ENCODE measurements at regions of chr18 and their contacts with region 1.

Region 1: DNA sequence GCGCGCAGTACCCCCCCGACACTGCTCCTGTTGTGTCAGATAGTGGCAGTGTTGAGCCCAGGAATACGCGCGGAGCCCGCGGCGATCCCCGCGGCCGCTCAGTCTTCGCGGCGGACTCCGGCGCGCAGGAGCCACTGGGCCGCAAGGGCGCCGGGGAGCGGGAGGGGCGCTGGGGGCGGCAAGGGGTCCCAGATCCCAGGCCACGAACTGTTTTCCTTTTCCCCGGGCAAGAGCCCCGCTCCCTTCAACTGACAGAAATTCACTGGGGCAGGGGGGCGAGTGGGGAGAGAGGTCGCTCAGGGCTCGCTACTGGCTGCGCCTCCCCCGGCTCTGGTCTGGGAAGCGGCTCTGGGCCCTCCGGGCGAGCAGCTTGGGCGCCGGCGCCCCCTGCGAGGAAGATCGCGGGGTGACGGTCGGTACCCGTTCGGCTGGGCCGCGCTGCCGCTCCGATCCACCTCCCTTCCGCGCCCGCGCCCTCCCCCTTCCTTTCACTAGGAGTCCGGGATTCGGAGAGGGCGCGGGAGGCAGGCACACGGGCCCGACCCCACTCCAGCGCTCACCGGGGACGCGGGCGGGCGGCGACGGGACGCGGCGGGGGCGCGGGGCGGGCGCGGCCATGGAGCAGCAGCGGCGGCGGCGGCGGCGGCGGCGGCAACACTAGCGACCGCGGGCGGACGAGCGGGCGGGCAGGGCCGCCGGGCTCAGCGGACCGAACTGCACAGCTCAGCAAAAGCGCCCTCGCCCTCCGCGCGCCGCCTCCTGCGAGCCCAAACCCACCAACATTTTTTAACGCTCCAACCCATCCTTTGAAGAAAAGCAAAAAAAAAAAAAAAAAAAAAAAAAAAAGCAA is 1.4 kb upstream of the SETBP1 start:
- DNase-seq: peak; percentile 83
- ATAC-seq: peak; percentile 81
- H3K4me3 Mint-ChIP-seq: peak overlapping the region; percentile 75
- H3K27ac Mint-ChIP-seq: peak overlapping the region; percentile 63
- H3K4me1 Mint-ChIP-seq: peaks cover 9% of the 10 kb centered on the region
- H3K27me3 Mint-ChIP-seq: no peaks in the 10 kb centered on the region
- CTCF ChIP-seq: no peak

Region 2: DNA sequence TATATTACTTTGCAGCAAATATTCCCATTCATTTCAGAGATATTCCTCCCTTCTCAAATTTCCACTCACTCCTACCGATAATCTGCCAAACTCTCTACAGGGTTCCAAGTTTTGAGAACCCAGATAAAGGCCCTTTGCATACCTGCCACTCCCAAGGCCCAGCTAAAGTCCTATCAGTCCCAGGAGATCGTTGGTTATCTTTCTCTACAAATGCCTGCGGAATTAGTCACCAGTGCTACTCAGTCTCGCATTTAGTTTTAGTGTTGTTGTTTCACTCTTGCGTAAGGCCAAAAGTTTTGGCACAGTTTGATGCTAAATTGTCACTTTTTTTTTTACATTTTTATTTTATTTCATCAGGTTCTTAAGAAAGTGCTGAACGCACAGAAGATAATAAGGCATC is 27.8 kb before region 1 on chr18:
- CTCF ChIA-PET with region 1: no interaction called
- POLR2A ChIA-PET with region 1: no interaction called
- intact Hi-C with region 1: no loop called
- DNase-seq: no peak
- ATAC-seq: no peak
- H3K4me3 Mint-ChIP-seq: no peak overlapping the region
- H3K27ac Mint-ChIP-seq: no peak overlapping the region
- H3K4me1 Mint-ChIP-seq: no peaks in the 10 kb centered on the region
- H3K27me3 Mint-ChIP-seq: peaks cover 2% of the 10 kb centered on the region
- CTCF ChIP-seq: no peak

Region 3: DNA sequence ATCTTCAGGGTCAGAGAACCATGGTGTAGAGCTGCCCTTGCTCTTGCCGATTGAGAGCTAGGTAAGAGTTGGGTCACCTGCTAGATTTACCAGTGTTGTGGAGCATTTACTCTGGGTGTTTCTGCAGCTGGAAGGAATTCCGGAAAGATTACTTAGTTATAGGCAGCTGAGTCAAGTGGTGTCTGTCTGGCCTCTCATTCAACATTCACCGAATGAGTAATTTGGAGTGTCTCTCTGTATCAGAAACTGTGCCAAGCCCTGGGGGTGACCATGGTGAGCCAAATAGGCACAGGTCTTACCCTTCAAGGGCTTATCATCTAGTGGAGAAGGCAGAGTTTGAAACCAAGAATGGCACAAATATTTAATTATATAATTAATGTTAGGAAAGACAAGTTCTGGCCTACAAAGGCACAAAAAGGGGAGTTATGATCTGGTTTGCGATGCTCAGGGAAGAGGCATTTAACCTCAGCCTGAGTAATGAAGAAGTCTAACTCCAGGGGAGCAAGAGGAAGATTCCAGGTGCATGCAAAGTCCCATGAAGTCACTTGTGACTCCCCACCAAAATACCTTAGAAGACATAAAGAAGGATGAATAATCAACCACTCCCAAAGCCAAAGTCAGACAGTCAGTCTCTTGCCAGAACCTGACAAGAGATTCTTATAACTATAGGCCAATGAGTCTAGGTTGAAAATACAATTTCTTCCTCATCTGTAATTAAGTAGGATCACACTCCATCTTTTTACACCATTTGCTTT is 13.9 kb after region 1 on chr18:
- CTCF ChIA-PET with region 1: interaction called, 4 read pairs
- POLR2A ChIA-PET with region 1: interaction called, 12 read pairs
- intact Hi-C with region 1: no loop called
- DNase-seq: no peak
- ATAC-seq: no peak
- H3K4me3 Mint-ChIP-seq: no peak overlapping the region
- H3K27ac Mint-ChIP-seq: peak overlapping the region; percentile 9
- H3K4me1 Mint-ChIP-seq: peaks cover 86% of the 10 kb centered on the region
- H3K27me3 Mint-ChIP-seq: no peaks in the 10 kb centered on the region
- CTCF ChIP-seq: no peak

Region 4: GRCh38 chr18:44786688-44787087 is 107.4 kb after region 1 on chr18:
- CTCF ChIA-PET with region 1: no interaction called
- POLR2A ChIA-PET with region 1: interaction called, 18 read pairs
- intact Hi-C with region 1: loop called (anchors 1 kb)
- DNase-seq: no peak
- ATAC-seq: peak; percentile 75
- H3K4me3 Mint-ChIP-seq: peak overlapping the region; percentile 85
- H3K27ac Mint-ChIP-seq: peak overlapping the region; percentile 92
- H3K4me1 Mint-ChIP-seq: peaks cover 80% of the 10 kb centered on the region
- H3K27me3 Mint-ChIP-seq: no peaks in the 10 kb centered on the region
- CTCF ChIP-seq: no peak

Region 5: GRCh38 chr18:44887227-44887631 is 207.9 kb after region 1 on chr18:
- CTCF ChIA-PET with region 1: interaction called, 6 read pairs
- POLR2A ChIA-PET with region 1: interaction called, 44 read pairs
- intact Hi-C with region 1: loop called (anchors 1 kb)
- DNase-seq: peak; percentile 23
- ATAC-seq: peak; percentile 95
- H3K4me3 Mint-ChIP-seq: peak overlapping the region; percentile 59
- H3K27ac Mint-ChIP-seq: peak overlapping the region; percentile 94
- H3K4me1 Mint-ChIP-seq: peaks cover 58% of the 10 kb centered on the region
- H3K27me3 Mint-ChIP-seq: no peaks in the 10 kb centered on the region
- CTCF ChIP-seq: no peak

Region 6: GRCh38 chr18:44979748-44980147 is 300.5 kb after region 1 on chr18:
- CTCF ChIA-PET with region 1: no interaction called
- POLR2A ChIA-PET with region 1: no interaction called
- intact Hi-C with region 1: loop called (anchors 1 kb)
- DNase-seq: no peak
- ATAC-seq: no peak
- H3K4me3 Mint-ChIP-seq: no peak overlapping the region
- H3K27ac Mint-ChIP-seq: peak overlapping the region; percentile 25
- H3K4me1 Mint-ChIP-seq: peaks cover 10% of the 10 kb centered on the region
- H3K27me3 Mint-ChIP-seq: no peaks in the 10 kb centered on the region
- CTCF ChIP-seq: no peak

Region 7: DNA sequence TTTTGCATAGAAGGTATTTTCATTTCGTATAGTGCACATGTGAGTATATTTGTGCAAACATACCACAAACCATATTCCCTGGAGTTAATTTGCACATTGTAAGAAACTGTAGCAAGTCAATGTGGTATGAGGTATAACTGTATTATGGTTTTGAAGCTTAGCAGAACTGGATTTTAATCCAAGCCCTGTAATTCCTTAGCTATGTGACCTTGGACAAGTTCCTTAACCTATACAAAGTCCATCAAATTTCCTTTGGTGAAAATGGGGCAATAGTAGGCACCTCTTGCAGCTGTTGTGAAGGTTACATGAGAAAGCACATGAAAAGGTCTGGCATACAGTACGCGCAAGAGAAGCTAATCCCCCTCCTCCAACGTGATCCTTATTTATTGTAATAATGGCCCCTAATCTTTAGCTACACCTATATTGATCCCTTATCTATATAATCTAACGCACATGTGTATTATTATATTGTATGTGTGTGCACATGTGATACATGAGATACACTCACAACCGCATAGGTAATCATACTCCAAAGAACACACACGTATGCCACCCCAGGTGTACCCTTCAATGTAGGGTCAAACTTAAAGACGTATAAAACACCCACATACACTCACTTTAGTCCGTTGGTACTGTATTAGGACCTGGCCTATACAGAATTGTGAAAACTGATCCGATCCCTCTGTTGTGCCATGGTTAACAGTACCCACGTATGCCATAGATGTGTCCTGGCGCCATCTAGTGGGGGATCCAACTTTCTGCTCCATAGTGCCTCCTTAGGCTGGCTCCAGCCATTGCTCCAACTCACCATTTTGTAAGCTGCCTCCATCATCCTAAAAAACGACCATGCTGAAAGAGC is 533.1 kb after region 1 on chr18:
- CTCF ChIA-PET with region 1: interaction called, 33 read pairs
- POLR2A ChIA-PET with region 1: interaction called, 22 read pairs
- intact Hi-C with region 1: loop called (anchors 1 kb)
- DNase-seq: peak; percentile 66
- ATAC-seq: peak; percentile 100
- H3K4me3 Mint-ChIP-seq: no peak overlapping the region
- H3K27ac Mint-ChIP-seq: no peak overlapping the region
- H3K4me1 Mint-ChIP-seq: peaks cover 7% of the 10 kb centered on the region
- H3K27me3 Mint-ChIP-seq: no peaks in the 10 kb centered on the region
- CTCF ChIP-seq: peak; percentile 96

Measured in activated B cell treated with CpG ODN at 0.5 μM for 24 hours (primary cell).